Activated naive CD4-positive, alpha-beta T cell treated with anti-CD3 and anti-CD28 coated beads for 36 hours (primary cell): ENCODE measurements at regions of chr6 and their contacts with region 1.

Region 1: GRCh38 chr6:44855562-44856411 is 468.3 kb downstream of the CDC5L start:
- DNase-seq: no peak
- H3K4me3 Mint-ChIP-seq: no peak overlapping the region
- H3K27ac Mint-ChIP-seq: no peak overlapping the region
- H3K4me1 Mint-ChIP-seq: peaks cover 39% of the 10 kb centered on the region
- H3K27me3 Mint-ChIP-seq: no peaks in the 10 kb centered on the region

Region 2: DNA sequence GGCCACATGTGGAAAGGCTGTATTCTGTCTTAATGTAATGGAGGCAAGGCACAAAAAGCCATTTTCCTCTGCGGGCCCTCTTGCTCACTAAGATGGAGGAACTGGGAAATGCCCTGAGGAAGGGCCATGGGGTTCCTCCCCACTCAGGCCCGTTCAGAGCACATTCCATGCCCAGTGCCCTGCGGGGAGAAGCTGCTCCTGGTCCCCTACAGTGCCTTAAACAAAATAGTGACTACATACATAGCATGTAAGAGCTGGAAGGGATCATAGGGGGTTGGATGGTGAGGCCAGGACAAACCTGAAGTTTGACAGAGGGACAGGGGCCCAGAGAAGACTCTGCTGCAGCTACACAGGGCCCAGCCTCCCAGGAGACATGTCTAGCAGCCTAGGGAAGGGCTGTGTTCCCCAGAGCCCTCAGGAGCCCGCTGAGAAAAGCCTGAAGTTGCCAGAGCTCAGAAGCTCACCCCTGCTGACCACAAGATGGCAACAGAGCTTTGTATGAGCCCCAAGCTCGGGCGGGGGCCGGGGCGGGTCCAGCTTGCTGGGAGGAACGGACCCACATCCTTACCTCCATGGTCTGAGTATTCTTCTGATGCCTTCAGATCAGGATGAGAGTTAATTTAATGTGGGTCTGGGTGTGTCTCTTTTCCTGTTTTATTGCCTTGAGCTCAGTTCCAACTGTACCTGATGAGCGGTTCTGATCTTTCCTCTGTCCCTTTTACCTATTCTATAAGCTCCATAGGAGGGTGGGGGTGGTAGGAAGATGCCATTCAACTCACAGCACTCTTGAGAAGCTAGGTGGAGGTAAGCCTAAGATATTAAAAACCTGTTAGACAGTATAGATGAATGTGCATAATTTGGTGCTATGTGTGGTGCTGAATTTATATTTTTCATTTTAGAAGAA is 225.4 kb before region 1 on chr6:
- CTCF ChIA-PET with region 1: no interaction called
- intact Hi-C with region 1: loop called (anchors 1 kb)
- DNase-seq: peak; percentile 50
- H3K4me3 Mint-ChIP-seq: no peak overlapping the region
- H3K27ac Mint-ChIP-seq: no peak overlapping the region
- H3K4me1 Mint-ChIP-seq: peaks cover 13% of the 10 kb centered on the region
- H3K27me3 Mint-ChIP-seq: no peaks in the 10 kb centered on the region